GM23248 (cell line): ENCODE measurements at regions of chr3 and their contacts with region 1.

Region 1: GRCh38 chr3:36700537-36701248 is 63.7 kb downstream of the DCLK3 start:
- DNase-seq: peak; percentile 89
- H3K4me3 ChIP-seq: no peak overlapping the region
- H3K27ac ChIP-seq: no peak overlapping the region
- H3K4me1 ChIP-seq: peaks cover 22% of the 10 kb centered on the region
- H3K27me3 ChIP-seq: no peaks in the 10 kb centered on the region

Region 2: DNA sequence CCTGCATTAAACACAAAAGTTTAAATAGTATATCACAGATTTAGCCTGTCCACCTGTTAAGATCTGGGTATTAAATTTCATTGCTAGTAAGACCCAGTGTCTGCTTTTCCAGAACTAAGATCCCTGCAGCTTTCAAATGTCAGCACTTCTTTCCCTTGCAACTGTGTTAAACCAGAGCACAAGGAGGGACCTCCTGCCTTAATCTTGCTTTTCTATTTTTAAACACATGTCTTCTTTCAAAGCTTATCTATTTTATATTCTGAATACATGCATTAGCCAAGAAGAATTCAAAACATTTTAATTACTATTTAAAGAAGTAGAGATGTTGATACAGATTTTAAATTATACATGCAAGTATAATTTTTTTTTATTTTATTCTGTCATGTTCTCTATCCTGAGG is 746.3 kb before region 1 on chr3:
- in situ Hi-C with region 1: loop called (anchors 10 kb)
- DNase-seq: no peak
- H3K4me3 ChIP-seq: no peak overlapping the region
- H3K27ac ChIP-seq: no peak overlapping the region
- H3K4me1 ChIP-seq: no peaks in the 10 kb centered on the region
- H3K27me3 ChIP-seq: no peaks in the 10 kb centered on the region; the same call in 1 of the 2 replicates

Region 3: GRCh38 chr3:36095238-36095637 is 605.5 kb before region 1 on chr3:
- in situ Hi-C with region 1: no loop called
- DNase-seq: no peak
- H3K4me3 ChIP-seq: no peak overlapping the region
- H3K27ac ChIP-seq: no peak overlapping the region
- H3K4me1 ChIP-seq: no peaks in the 10 kb centered on the region
- H3K27me3 ChIP-seq: no peaks in the 10 kb centered on the region

Region 4: DNA sequence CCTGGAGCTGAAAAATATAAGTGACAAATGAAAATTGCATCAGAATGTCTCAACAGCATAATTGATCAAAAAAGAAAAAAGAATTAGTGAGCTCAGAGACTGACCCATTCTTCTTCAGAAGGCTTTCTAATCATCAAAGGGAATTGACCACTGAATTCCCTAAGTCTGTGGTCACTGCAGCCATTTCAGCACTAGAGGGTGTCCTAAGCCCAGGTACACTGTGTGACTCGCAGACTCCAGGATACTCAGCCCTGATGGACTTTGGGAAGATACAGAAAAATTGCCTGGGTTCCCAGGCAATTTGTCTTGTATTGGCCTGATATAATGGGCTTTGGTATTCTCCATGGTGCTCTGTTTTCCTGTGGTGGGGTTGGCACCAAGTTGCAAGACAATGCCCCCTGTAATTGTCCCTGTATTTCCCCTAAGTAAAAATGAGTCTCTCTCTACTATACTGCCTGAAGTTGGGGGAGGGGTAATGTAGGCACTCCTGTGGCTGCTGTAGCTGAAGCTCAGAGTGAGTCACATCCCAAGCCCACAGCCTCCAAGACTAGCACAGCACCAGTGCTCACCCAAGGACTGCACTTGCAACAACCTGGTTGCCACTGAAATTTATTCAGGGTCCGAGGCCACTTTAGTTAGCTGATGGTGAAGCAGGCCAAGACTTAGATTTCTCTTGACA is 576.4 kb before region 1 on chr3:
- in situ Hi-C with region 1: loop called (anchors 5 kb)
- DNase-seq: peak; percentile 76
- H3K4me3 ChIP-seq: no peak overlapping the region
- H3K27ac ChIP-seq: no peak overlapping the region
- H3K4me1 ChIP-seq: no peaks in the 10 kb centered on the region
- H3K27me3 ChIP-seq: 0 out of 2 replicates have a peak, but pooled peaks cover 3% of the 10 kb centered on the region

Region 5: DNA sequence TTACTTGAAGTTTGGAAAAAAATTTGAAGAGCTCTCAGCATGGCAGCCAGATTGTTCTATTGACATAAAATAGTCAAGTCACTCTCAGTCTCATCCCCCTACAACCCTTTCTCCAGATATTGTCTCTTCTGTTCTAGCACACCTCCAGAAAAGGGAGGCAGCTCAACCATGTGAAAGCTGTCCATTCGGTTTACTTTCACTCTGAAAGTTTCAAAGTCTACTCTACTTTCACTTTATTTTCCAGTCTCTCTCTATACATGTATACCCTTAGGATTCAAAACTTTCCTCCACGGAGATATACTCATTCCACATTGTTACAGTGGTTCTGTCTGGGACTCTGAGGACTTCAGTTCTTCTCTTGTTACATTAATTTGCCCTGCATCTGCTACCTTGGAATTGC is 431.4 kb before region 1 on chr3:
- in situ Hi-C with region 1: no loop called
- DNase-seq: no peak
- H3K4me3 ChIP-seq: no peak overlapping the region
- H3K27ac ChIP-seq: no peak overlapping the region
- H3K4me1 ChIP-seq: no peaks in the 10 kb centered on the region
- H3K27me3 ChIP-seq: 0 out of 2 replicates have a peak, but pooled peaks cover 6% of the 10 kb centered on the region